Aorta (tissue), 5 donors: ENCODE measurements at regions of chr3 and their contacts with region 1.

Region 1: GRCh38 chr3:6791161-6791560 is 69.8 kb upstream of the GRM7 start:
- DNase-seq: no peak
- ATAC-seq: no peak
- H3K4me3 ChIP-seq: no peak overlapping the region
- H3K27ac ChIP-seq: no peak overlapping the region
- H3K4me1 ChIP-seq: no peaks in the 10 kb centered on the region
- H3K27me3 ChIP-seq: no peaks in the 10 kb centered on the region

Region 2: GRCh38 chr3:7025581-7026300 is 234.6 kb after region 1 on chr3:
- intact Hi-C with region 1: no loop called
- DNase-seq: no peak
- ATAC-seq: no peak
- H3K4me3 ChIP-seq: no peak overlapping the region
- H3K27ac ChIP-seq: no peak overlapping the region
- H3K4me1 ChIP-seq: no peaks in the 10 kb centered on the region
- H3K27me3 ChIP-seq: no peaks in the 10 kb centered on the region

Region 3: GRCh38 chr3:8111069-8111798 is 1320.1 kb after region 1 on chr3:
- intact Hi-C with region 1: loop called in 1 of 2 experiments (anchors 5 kb)
- DNase-seq: peak in 1 of 2 donors; percentile 53
- ATAC-seq: peak; percentile 87
- H3K4me3 ChIP-seq: peak overlapping the region in 1 of 2 donors; percentile 59
- H3K27ac ChIP-seq: no peak overlapping the region
- H3K4me1 ChIP-seq: peaks cover 0 to 2% of the 10 kb centered on the region in 2 donors
- H3K27me3 ChIP-seq: no peaks in the 10 kb centered on the region